IMR-90 (cell line): ENCODE measurements at regions of chr6 and their contacts with region 1.

Region 1: DNA sequence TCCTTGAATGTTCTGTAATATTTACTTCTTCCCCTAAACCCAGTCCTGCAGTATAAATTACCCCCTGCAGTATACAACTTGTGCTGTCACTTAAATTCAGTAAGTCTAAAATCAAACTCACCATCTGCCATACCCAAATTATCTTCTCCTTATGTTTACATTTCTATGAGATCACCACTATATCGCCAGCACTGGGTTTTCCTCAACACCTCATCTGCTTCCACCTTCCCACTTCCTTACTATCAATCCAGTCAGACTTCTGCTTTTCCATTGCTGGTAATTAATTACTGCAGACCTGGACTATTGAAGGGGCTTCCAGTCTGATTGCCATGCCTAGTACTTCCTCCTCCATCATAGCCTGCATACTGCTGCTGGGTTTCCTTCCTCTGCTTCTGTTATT is 15.2 kb downstream of the EFHC1 start:
- DNase-seq: no peak
- ATAC-seq: no peak
- H3K4me3 ChIP-seq: no peak overlapping the region
- H3K27ac ChIP-seq: no peak overlapping the region
- H3K4me1 ChIP-seq: no peaks in the 10 kb centered on the region
- H3K27me3 ChIP-seq: no peaks in the 10 kb centered on the region
- CTCF ChIP-seq: no peak
- POLR2A ChIP-seq: no peak
- RAD21 ChIP-seq: no peak

Region 2: GRCh38 chr6:52489881-52490280 is 54.5 kb after region 1 on chr6:
- CTCF ChIA-PET with region 1: no interaction called
- POLR2A ChIA-PET with region 1: no interaction called
- dilution Hi-C with region 1: no loop called
- in situ Hi-C with region 1: no loop called
- intact Hi-C with region 1: loop called (anchors 5 kb)
- DNase-seq: no peak
- ATAC-seq: no peak
- H3K4me3 ChIP-seq: no peak overlapping the region
- H3K27ac ChIP-seq: no peak overlapping the region
- H3K4me1 ChIP-seq: no peaks in the 10 kb centered on the region
- H3K27me3 ChIP-seq: no peaks in the 10 kb centered on the region
- CTCF ChIP-seq: no peak
- POLR2A ChIP-seq: no peak
- RAD21 ChIP-seq: no peak

Region 3: GRCh38 chr6:52691718-52692117 is 256.4 kb after region 1 on chr6:
- CTCF ChIA-PET with region 1: no interaction called
- POLR2A ChIA-PET with region 1: no interaction called
- dilution Hi-C with region 1: no loop called
- in situ Hi-C with region 1: no loop called
- intact Hi-C with region 1: no loop called
- DNase-seq: peak; percentile 5
- ATAC-seq: no peak
- H3K4me3 ChIP-seq: no peak overlapping the region
- H3K27ac ChIP-seq: no peak overlapping the region
- H3K4me1 ChIP-seq: peaks cover 2% of the 10 kb centered on the region; the same call in 1 of the 2 replicates
- H3K27me3 ChIP-seq: no peaks in the 10 kb centered on the region
- CTCF ChIP-seq: 0 out of 2 replicates have a peak, but pooled peaks have one; percentile 1
- POLR2A ChIP-seq: no peak
- RAD21 ChIP-seq: no peak